ENCODE measurements at regions of chr15 and their contacts with region 1.

Region 1: DNA sequence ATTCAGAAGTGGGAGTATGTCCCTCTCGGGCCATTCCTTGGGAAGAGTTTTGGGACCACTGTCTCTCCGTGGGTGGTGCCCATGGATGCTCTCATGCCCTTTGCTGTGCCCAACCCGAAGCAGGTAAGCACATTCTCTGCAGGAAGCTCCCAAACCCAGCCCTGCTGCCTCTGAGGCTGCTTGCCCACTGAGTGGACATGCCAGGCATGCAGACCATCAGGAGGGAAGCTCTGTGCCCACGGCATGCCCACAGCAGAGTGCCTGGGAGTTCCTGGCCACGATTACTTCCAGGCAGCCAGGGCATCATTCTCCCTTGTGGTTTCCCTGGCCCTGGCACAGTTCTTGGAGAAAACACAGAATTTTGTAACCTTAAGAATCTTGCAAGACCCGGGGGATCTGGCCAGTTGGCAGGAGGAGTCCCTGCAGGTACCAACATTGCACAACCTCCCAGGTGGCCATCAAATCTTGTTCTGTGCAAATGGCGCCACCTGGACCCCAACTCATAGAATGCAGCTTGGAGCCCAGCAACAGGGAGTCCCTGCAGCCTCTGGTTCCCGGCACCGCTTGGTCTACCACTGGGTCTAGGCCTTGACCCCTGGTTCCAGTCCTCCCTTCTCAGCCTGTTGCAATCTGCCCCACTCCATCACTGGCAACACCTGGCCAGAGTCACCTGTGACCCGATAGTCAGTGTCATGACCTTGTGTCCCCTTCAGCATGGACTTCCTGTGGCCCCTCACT is 20.4 kb downstream of the FAH start:
- DNase-seq: peak; percentile 65 to 79 (median 72)
- ATAC-seq: peak; percentile 95
- H3K4me3 ChIP-seq: no peak overlapping the region
- H3K27ac ChIP-seq: no peak overlapping the region
- H3K4me1 ChIP-seq: peaks cover 0 to 3% of the 10 kb centered on the region in 2 experiments; a peak in 1 of 5 replicates
- H3K27me3 ChIP-seq: no peaks in the 10 kb centered on the region
- CTCF ChIP-seq: peak; percentile 84 to 88 (median 85)
- EP300 ChIP-seq: no peak
- POLR2A ChIP-seq: no peak
- RAD21 ChIP-seq: peak; percentile 88 to 93

Region 2: DNA sequence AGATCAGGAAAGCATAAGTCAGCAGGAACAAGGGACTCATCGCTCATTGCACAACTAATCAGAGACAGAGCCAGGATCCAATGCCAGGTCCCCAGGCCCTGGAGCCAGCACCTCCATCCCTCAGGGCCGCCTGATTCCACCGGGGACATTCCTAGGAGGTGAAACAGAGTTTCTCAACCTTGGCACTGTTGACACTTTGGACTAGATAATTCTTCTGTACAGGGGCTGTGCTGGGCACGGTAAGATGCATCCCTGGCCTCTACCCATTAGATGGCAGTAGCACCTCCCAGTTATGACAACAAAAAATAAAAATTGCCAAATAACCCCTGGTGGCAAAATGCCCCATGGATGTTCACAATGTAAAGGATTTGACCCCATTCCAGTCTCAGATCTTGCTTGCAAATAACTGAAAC is 404.1 kb before region 1 on chr15:
- CTCF ChIA-PET with region 1: interaction called, 5 read pairs
- POLR2A ChIA-PET with region 1: no interaction called
- in situ Hi-C with region 1: no loop called
- intact Hi-C with region 1: loop called (anchors 10 kb)
- DNase-seq: peak in 1 of 4 experiments; percentile 12
- ATAC-seq: peak; percentile 55; the same call in 2 of the 3 replicates
- H3K4me3 ChIP-seq: no peak overlapping the region
- H3K27ac ChIP-seq: no peak overlapping the region
- H3K4me1 ChIP-seq: no peaks in the 10 kb centered on the region
- H3K27me3 ChIP-seq: peaks cover 3 to 21% of the 10 kb centered on the region in 2 experiments; a peak in 4 of 5 replicates
- CTCF ChIP-seq: peak; percentile 36 to 60 (median 60); a peak in 4 of 6 replicates
- EP300 ChIP-seq: no peak
- POLR2A ChIP-seq: no peak
- RAD21 ChIP-seq: peak in 1 of 2 experiments; percentile 59; a peak in 2 of 4 replicates

Measured in K562 (cell line).